ENCODE measurements at regions of chr12 and their contacts with region 1.

Region 1: DNA sequence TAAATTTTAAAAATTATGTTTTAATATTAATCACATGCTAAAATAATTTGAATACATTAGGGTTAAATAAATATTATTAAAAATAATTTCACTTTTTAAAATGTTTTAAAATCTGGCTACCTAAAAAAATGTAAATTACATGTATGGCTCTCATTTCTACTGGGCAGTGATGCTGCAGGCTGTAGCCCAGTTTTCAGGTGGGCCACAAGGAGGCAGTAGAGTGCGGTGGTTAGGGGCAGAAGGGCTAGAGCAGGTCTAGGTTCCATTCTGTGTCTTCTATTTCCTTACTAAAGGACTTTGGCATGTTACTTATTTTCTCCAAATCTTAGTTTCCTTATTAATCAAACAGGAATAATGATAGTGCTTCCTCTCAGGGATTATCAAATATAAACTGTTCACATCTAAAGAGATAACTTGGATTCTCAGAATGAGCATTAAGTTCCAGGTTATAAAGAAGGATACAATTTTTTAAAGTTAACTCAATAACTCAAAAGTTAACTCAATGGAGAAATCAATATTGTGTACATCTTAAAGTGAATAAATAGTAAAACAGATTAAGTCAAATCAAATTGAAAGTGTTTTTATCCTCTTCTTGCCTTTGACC is 54.9 kb upstream of the OVCH1 start:
- DNase-seq: peak; percentile 39
- H3K4me3 Mint-ChIP-seq: no peak overlapping the region
- H3K27ac Mint-ChIP-seq: no peak overlapping the region
- H3K4me1 Mint-ChIP-seq: no peaks in the 10 kb centered on the region
- H3K27me3 Mint-ChIP-seq: peaks cover 1% of the 10 kb centered on the region

Region 2: DNA sequence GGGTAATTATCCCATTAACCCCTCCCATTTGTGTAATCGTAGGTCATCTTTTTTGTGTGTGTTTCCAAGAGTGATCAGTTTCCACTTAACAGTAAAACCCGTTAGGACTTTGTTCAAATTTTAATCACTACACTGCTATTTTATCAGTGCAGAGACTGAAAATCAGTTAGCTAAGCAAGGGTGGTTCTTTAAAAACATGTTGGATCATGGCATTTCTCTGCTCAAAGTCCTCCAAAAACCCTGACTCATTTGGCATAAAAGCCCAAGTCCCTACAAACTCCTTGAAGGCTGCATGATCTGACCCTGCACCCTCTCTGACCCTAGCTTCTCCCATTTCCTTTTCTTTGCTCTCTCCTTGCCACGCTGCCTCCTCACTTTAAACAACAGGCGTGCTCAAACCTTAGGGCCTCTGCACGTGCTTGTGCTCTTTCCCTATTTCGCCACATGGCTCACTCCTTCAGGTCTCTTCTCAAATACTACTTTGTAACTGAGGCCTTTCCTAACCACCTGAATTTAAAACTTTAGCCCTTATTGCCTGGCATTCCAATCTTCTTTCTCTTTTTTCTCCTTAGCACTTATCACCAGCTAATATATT is 41.7 kb before region 1 on chr12:
- intact Hi-C with region 1: no loop called
- DNase-seq: no peak
- H3K4me3 Mint-ChIP-seq: no peak overlapping the region
- H3K27ac Mint-ChIP-seq: no peak overlapping the region
- H3K4me1 Mint-ChIP-seq: no peaks in the 10 kb centered on the region
- H3K27me3 Mint-ChIP-seq: peaks cover 4% of the 10 kb centered on the region

Region 3: GRCh38 chr12:29889737-29890136 is 337.3 kb after region 1 on chr12:
- intact Hi-C with region 1: loop called (anchors 5 kb)
- DNase-seq: peak; percentile 10
- H3K4me3 Mint-ChIP-seq: no peak overlapping the region
- H3K27ac Mint-ChIP-seq: no peak overlapping the region
- H3K4me1 Mint-ChIP-seq: no peaks in the 10 kb centered on the region
- H3K27me3 Mint-ChIP-seq: no peaks in the 10 kb centered on the region

Measured in activated T-helper 2 cell treated with anti-CD3 and anti-CD28 coated beads, Interferon-gamma antibody, Interleukin-2, Interleukin-4, amounts not matched to agents 10 μg/mL and 5 μg/mL and 100 μg/mL, durations not matched to agents 14 hours and 24 hours and 36 hours (primary cell).